Calu3 (cell line): ENCODE measurements at regions of chrX and their contacts with region 1.

Region 1: DNA sequence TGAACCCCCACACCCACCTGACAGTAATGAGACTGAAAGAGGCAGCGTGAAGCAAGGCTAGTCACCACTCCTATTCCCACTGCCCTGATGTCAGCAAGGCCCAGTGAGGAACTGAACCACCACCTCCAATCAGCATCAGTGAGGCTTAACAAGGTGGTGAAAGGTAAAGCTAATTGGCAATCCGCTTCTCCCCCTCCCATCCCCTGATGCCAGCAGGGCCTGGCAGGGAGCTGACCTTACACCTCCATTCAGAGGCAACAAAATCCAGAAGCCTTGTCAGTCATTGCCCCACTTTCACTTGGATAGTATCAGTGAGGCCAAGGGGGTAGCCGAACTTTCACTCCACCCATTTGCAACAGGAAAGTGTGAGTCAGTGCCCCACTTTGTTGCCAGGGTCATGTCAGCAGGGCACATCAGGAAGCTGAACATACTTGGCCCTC is 60.8 kb downstream of the AWAT2 start:
- DNase-seq: peak; percentile 28
- H3K4me3 Mint-ChIP-seq: no peak overlapping the region
- H3K27ac Mint-ChIP-seq: no peak overlapping the region
- H3K4me1 Mint-ChIP-seq: no peaks in the 10 kb centered on the region
- H3K27me3 Mint-ChIP-seq: no peaks in the 10 kb centered on the region
- CTCF ChIP-seq: no peak

Region 2: GRCh38 chrX:69932323-69932722 is 56.7 kb before region 1 on chrX:
- CTCF ChIA-PET with region 1: no interaction called
- intact Hi-C with region 1: no loop called
- DNase-seq: no peak
- H3K4me3 Mint-ChIP-seq: no peak overlapping the region
- H3K27ac Mint-ChIP-seq: no peak overlapping the region
- H3K4me1 Mint-ChIP-seq: no peaks in the 10 kb centered on the region
- H3K27me3 Mint-ChIP-seq: no peaks in the 10 kb centered on the region
- CTCF ChIP-seq: no peak

Region 3: GRCh38 chrX:70022616-70023015 is 33.6 kb after region 1 on chrX:
- CTCF ChIA-PET with region 1: no interaction called
- intact Hi-C with region 1: loop called (anchors 5 kb)
- DNase-seq: no peak
- H3K4me3 Mint-ChIP-seq: no peak overlapping the region
- H3K27ac Mint-ChIP-seq: peak overlapping the region; percentile 92
- H3K4me1 Mint-ChIP-seq: peaks cover 39% of the 10 kb centered on the region
- H3K27me3 Mint-ChIP-seq: no peaks in the 10 kb centered on the region
- CTCF ChIP-seq: no peak

Region 4: DNA sequence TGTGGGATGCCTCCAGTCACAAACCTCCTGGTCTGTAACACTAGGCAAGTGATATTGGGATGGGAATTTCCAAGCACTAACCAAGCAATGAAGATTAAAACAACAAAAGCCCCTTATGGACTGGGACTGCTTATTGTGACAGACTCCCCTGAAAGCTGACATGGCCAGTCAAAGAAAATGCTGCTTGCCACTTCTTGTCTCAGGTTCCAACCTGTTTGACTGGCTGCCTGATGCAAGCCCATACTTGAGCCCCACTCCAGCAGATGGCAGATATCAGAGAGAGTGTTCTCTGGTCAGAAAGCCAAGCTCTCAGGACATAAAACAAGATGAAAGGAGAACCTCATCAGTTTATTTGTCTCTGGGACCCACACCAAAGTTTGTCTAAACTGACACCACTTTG is 128.7 kb after region 1 on chrX:
- CTCF ChIA-PET with region 1: no interaction called
- intact Hi-C with region 1: no loop called
- DNase-seq: no peak
- H3K4me3 Mint-ChIP-seq: no peak overlapping the region
- H3K27ac Mint-ChIP-seq: no peak overlapping the region
- H3K4me1 Mint-ChIP-seq: no peaks in the 10 kb centered on the region
- H3K27me3 Mint-ChIP-seq: peaks cover 13% of the 10 kb centered on the region
- CTCF ChIP-seq: no peak